Astrocyte of the cerebellum (primary cell): ENCODE measurements at regions of chr11 and their contacts with region 1.

Region 1: GRCh38 chr11:111652184-111652583 is 49.9 kb downstream of the SIK2 start:
- DNase-seq: no peak
- H3K4me3 ChIP-seq: no peak overlapping the region
- CTCF ChIP-seq: no peak

Region 2: GRCh38 chr11:111422494-111423249 is 229.5 kb before region 1 on chr11:
- in situ Hi-C with region 1: no loop called
- DNase-seq: no peak
- H3K4me3 ChIP-seq: no peak overlapping the region
- CTCF ChIP-seq: peak; percentile 84

Region 3: GRCh38 chr11:111688028-111688427 is 35.8 kb after region 1 on chr11:
- in situ Hi-C with region 1: loop called (anchors 5 kb)
- DNase-seq: no peak
- H3K4me3 ChIP-seq: no peak overlapping the region
- CTCF ChIP-seq: no peak

Region 4: GRCh38 chr11:111741751-111742150 is 89.6 kb after region 1 on chr11:
- in situ Hi-C with region 1: loop called (anchors 5 kb)
- DNase-seq: no peak
- H3K4me3 ChIP-seq: no peak overlapping the region
- CTCF ChIP-seq: no peak